ENCODE measurements at regions of chr3 and their contacts with region 1.

Region 1: GRCh38 chr3:25021816-25022215 is 406.2 kb upstream of the RARB start:
- DNase-seq: peak; percentile 33
- H3K4me3 Mint-ChIP-seq: no peak overlapping the region
- H3K27ac Mint-ChIP-seq: no peak overlapping the region
- H3K4me1 Mint-ChIP-seq: no peaks in the 10 kb centered on the region
- H3K27me3 Mint-ChIP-seq: no peaks in the 10 kb centered on the region
- CTCF ChIP-seq: peak; percentile 54

Region 2: DNA sequence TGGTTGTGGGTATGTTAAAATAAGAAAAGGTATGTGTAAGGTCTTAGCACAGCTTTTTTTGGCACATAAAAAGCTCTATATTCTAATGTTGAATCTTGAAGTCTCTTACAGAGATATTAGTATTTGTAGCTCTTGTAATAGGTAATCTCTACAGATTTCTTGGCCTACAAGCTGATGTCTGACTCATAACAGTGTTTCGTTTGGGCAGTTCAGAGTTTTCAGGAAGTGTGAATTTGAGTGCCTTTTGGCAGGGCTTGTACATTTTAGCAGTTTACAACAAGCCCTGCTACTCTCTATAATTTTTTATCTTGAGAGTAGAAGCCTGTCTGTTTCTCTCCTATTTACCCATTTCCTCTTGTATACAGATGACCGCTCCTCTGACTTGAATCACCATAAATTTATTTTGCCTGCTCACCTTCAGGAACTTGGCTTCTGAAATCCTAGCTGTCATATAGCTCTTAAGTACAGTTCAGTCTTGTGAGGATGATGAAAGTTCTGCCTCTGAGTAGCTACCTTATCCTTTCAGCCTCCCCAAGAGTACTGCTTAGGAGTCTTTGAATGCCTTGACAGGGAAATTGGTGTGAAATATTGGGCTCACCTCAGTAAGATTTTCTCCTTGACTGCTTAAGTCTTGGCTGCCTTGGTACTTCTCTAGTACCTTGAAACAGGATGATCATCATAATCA is 13.7 kb before region 1 on chr3:
- CTCF ChIA-PET with region 1: interaction called, 13 read pairs
- POLR2A ChIA-PET with region 1: interaction called, 4 read pairs
- intact Hi-C with region 1: no loop called
- DNase-seq: peak; percentile 65
- H3K4me3 Mint-ChIP-seq: no peak overlapping the region
- H3K27ac Mint-ChIP-seq: peak overlapping the region; percentile 40
- H3K4me1 Mint-ChIP-seq: peaks cover 9% of the 10 kb centered on the region
- H3K27me3 Mint-ChIP-seq: no peaks in the 10 kb centered on the region
- CTCF ChIP-seq: no peak

Region 3: GRCh38 chr3:25033407-25034029 is 11.7 kb after region 1 on chr3:
- CTCF ChIA-PET with region 1: interaction called, 48 read pairs
- POLR2A ChIA-PET with region 1: interaction called, 5 read pairs
- intact Hi-C with region 1: no loop called
- DNase-seq: peak; percentile 66
- H3K4me3 Mint-ChIP-seq: no peak overlapping the region
- H3K27ac Mint-ChIP-seq: no peak overlapping the region
- H3K4me1 Mint-ChIP-seq: no peaks in the 10 kb centered on the region
- H3K27me3 Mint-ChIP-seq: no peaks in the 10 kb centered on the region
- CTCF ChIP-seq: peak; percentile 45

Region 4: GRCh38 chr3:25582242-25582641 is 560.4 kb after region 1 on chr3:
- CTCF ChIA-PET with region 1: interaction called, 17 read pairs
- POLR2A ChIA-PET with region 1: interaction called, 4 read pairs
- intact Hi-C with region 1: no loop called
- DNase-seq: peak; percentile 94
- H3K4me3 Mint-ChIP-seq: no peak overlapping the region
- H3K27ac Mint-ChIP-seq: no peak overlapping the region
- H3K4me1 Mint-ChIP-seq: peaks cover 13% of the 10 kb centered on the region
- H3K27me3 Mint-ChIP-seq: peaks cover 73% of the 10 kb centered on the region
- CTCF ChIP-seq: no peak

Region 5: GRCh38 chr3:26312816-26313215 is 1291.0 kb after region 1 on chr3:
- CTCF ChIA-PET with region 1: no interaction called
- POLR2A ChIA-PET with region 1: no interaction called
- intact Hi-C with region 1: no loop called
- DNase-seq: no peak
- H3K4me3 Mint-ChIP-seq: no peak overlapping the region
- H3K27ac Mint-ChIP-seq: no peak overlapping the region
- H3K4me1 Mint-ChIP-seq: peaks cover 5% of the 10 kb centered on the region
- H3K27me3 Mint-ChIP-seq: no peaks in the 10 kb centered on the region
- CTCF ChIP-seq: no peak